ENCODE measurements at regions of chr5 and their contacts with region 1.

Region 1: GRCh38 chr5:40904205-40904993 is 4.9 kb upstream of the C7 start:
- DNase-seq: peak; percentile 71
- ATAC-seq: peak; percentile 98
- H3K4me3 ChIP-seq: peak overlapping the region in 2 of 3 experiments; percentile 23 to 35; a peak in 3 of 6 replicates
- H3K27ac ChIP-seq: peak overlapping the region; percentile 25
- H3K4me1 ChIP-seq: peaks cover 50% of the 10 kb centered on the region
- H3K27me3 ChIP-seq: no peaks in the 10 kb centered on the region
- CTCF ChIP-seq: peak; percentile 92
- EP300 ChIP-seq: peak in 1 of 2 experiments; percentile 46; a peak in 1 of 4 replicates
- POLR2A ChIP-seq: no peak
- RAD21 ChIP-seq: peak; percentile 84

Region 2: DNA sequence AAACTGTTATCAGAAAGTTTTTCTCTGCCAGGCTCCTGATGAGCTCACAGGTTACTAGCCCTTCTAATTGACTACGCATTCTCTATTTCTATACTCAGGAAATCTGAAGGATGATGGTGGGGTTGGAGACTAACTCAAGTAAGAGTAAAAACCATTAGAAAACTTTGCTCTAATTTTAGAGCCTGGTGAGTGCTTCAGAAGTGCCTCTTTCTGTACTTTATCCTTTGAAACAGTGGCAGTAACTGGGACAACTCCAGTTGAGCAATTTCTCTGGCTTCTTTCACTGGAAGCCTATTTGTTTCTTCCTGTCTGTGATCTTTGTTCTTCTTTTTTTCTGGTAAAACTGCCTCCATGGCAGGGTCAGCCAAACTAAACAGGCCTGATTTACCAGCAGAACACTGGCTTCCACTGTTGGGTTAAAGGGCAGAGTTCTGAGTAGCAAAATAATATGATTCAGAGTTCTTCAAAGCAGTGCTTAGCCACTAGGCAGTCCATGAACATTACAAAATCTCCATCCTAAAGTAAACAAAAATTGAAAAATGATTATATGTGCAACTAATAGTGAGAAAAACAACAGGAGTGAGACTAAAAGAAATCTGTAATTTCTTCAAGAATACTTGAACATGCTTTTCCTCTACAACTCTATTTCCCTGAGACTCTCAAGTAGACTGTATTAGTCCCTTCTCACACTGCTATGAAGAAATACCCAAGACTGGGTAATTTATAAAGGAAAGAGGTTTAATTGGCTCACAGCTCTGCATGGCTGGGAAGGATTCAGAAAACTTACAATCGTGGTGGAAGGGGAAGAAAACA is 87.0 kb after region 1 on chr5:
- CTCF ChIA-PET with region 1: no interaction called
- POLR2A ChIA-PET with region 1: no interaction called
- in situ Hi-C with region 1: no loop called
- intact Hi-C with region 1: loop called (anchors 1 kb)
- DNase-seq: peak; percentile 94
- ATAC-seq: peak; percentile 98
- H3K4me3 ChIP-seq: peak overlapping the region in 2 of 3 experiments; percentile 9 to 24; a peak in 1 of 6 replicates
- H3K27ac ChIP-seq: peak overlapping the region; percentile 91
- H3K4me1 ChIP-seq: peaks cover 51% of the 10 kb centered on the region
- H3K27me3 ChIP-seq: no peaks in the 10 kb centered on the region
- CTCF ChIP-seq: no peak
- EP300 ChIP-seq: peak in 1 of 2 experiments; percentile 95; a peak in 2 of 4 replicates
- POLR2A ChIP-seq: no peak
- RAD21 ChIP-seq: no peak

Region 3: DNA sequence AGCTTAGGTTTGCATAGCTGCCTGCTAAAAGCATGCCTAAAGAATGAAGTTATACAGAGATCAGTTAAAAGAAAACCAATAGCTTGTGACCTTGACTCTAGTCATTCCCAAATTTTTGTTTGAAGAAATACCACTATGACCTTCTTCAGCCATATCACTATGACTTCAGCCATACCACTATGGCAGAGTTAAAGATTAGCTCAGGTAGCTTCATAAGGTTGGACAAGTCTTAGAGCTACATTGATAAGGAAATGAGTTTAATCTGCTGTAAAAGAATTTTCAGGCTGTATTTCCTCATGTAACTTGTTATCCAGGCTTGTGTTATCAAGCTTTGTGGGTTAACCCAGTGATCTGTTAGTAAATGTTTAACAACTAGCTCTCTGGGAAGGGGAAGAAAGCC is 278.3 kb after region 1 on chr5:
- CTCF ChIA-PET with region 1: no interaction called
- POLR2A ChIA-PET with region 1: no interaction called
- in situ Hi-C with region 1: no loop called
- intact Hi-C with region 1: loop called (anchors 5 kb)
- DNase-seq: peak; percentile 83
- ATAC-seq: peak; percentile 95
- H3K4me3 ChIP-seq: no peak overlapping the region
- H3K27ac ChIP-seq: no peak overlapping the region
- H3K4me1 ChIP-seq: peaks cover 29% of the 10 kb centered on the region
- H3K27me3 ChIP-seq: no peaks in the 10 kb centered on the region
- CTCF ChIP-seq: no peak
- EP300 ChIP-seq: no peak
- POLR2A ChIP-seq: no peak
- RAD21 ChIP-seq: no peak

Region 4: DNA sequence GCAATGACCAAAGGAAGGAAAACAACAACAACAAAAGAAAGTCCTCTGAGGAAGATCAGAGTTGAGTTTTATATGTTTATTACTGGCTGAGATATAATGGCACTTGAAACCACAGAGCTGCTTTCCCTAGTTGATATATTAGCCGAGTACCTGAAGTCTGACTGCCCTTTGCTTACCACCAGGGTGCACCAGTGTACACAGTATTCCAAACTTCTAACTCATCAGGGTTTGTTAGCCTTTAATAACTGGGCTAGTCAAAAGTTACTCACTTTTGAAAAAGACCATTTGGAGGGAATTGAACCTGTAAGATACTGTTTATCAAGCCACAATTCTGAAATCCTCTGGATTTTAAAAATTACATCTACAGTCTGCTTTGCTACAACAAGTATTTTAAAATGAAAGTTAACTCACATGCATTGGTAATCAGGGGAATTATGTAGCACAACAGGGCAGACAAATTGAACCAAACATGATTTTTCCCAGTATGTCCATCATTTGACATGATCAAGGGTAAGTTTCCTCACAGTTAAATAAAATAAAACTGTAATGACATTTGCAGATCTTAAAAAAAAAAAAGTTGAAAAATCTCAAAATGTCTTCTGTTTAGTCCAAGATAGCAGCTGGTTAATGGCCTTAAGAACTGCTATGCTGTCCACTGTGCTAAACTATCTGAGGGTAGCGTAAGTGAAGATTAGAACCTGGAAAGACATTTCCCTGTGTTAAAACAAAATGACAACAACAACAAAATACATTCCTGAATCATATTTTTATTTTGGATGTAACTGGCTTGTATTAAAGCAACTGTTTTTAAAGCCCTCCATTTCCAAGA is 366.2 kb after region 1 on chr5:
- CTCF ChIA-PET with region 1: interaction called, 4 read pairs
- POLR2A ChIA-PET with region 1: no interaction called
- in situ Hi-C with region 1: no loop called
- intact Hi-C with region 1: loop called (anchors 1 kb)
- DNase-seq: peak; percentile 43
- ATAC-seq: peak; percentile 95
- H3K4me3 ChIP-seq: no peak overlapping the region
- H3K27ac ChIP-seq: no peak overlapping the region
- H3K4me1 ChIP-seq: no peaks in the 10 kb centered on the region
- H3K27me3 ChIP-seq: no peaks in the 10 kb centered on the region; a peak in 1 of 5 replicates
- CTCF ChIP-seq: peak; percentile 76
- EP300 ChIP-seq: no peak
- POLR2A ChIP-seq: no peak
- RAD21 ChIP-seq: peak; percentile 57; the same call in 1 of the 2 replicates

Region 5: DNA sequence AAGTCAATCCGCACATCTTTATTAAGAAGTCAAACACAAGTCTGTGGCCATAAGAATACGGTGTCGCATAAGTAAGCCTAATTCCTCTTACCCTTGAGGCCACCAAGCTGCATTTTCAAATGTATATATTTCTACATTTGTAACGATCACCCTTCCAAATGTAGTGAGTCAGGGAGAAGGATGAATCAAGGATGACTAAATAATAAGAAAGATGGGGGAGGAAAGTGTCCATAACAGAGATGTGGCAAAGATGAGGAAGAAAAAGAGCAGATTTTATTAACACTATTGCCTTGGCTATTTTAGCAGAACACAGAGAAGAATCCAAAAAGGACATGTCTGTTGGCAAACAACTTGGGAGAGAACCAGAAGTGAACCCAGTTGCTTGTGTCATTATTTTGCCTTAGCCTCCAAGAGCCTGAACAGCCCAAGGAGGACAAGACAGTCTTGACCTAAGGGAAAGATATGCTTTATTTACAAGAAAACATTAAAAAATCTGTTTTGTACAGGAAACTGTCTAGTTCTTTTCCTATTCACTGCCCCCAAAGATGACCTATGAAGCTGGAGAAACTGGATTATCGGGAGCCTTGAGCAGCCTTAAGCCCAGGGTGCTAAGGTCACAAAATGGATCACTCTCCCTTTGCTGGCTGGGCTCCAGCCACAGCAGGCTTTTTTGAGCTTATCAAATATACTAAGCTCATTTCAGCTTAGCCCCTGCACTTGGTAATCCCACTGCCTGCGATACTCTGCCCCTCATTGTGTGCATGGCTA is 504.5 kb after region 1 on chr5:
- CTCF ChIA-PET with region 1: no interaction called
- POLR2A ChIA-PET with region 1: no interaction called
- in situ Hi-C with region 1: no loop called
- intact Hi-C with region 1: loop called (anchors 1 kb)
- DNase-seq: no peak
- ATAC-seq: no peak
- H3K4me3 ChIP-seq: no peak overlapping the region
- H3K27ac ChIP-seq: no peak overlapping the region
- H3K4me1 ChIP-seq: peaks cover 44% of the 10 kb centered on the region
- H3K27me3 ChIP-seq: no peaks in the 10 kb centered on the region
- CTCF ChIP-seq: no peak
- EP300 ChIP-seq: no peak
- POLR2A ChIP-seq: no peak
- RAD21 ChIP-seq: no peak

Region 6: GRCh38 chr5:41636605-41637004 is 732.2 kb after region 1 on chr5:
- CTCF ChIA-PET with region 1: no interaction called
- POLR2A ChIA-PET with region 1: no interaction called
- in situ Hi-C with region 1: loop called (anchors 5 kb)
- intact Hi-C with region 1: loop called (anchors 1 kb)
- DNase-seq: peak; percentile 54
- ATAC-seq: peak; percentile 89
- H3K4me3 ChIP-seq: no peak overlapping the region
- H3K27ac ChIP-seq: no peak overlapping the region
- H3K4me1 ChIP-seq: peaks cover 35% of the 10 kb centered on the region
- H3K27me3 ChIP-seq: no peaks in the 10 kb centered on the region
- CTCF ChIP-seq: 0 out of 2 replicates have a peak, but pooled peaks have one; percentile 11
- EP300 ChIP-seq: no peak
- POLR2A ChIP-seq: no peak
- RAD21 ChIP-seq: no peak

Region 7: GRCh38 chr5:41843456-41844370 is 939.3 kb after region 1 on chr5:
- CTCF ChIA-PET with region 1: interaction called, 3 read pairs
- POLR2A ChIA-PET with region 1: no interaction called
- in situ Hi-C with region 1: no loop called
- intact Hi-C with region 1: loop called (anchors 2 kb)
- DNase-seq: peak; percentile 36
- ATAC-seq: peak; percentile 58
- H3K4me3 ChIP-seq: no peak overlapping the region
- H3K27ac ChIP-seq: no peak overlapping the region
- H3K4me1 ChIP-seq: no peaks in the 10 kb centered on the region
- H3K27me3 ChIP-seq: no peaks in the 10 kb centered on the region
- CTCF ChIP-seq: peak; percentile 72
- EP300 ChIP-seq: no peak
- POLR2A ChIP-seq: no peak
- RAD21 ChIP-seq: peak; percentile 38; the same call in 1 of the 2 replicates